Calu3 (cell line): ENCODE measurements at regions of chr1 and their contacts with region 1.

Region 1: GRCh38 chr1:107669996-107670395 is 295.0 kb downstream of the VAV3 start:
- DNase-seq: peak; percentile 76
- H3K4me3 Mint-ChIP-seq: peak overlapping the region; percentile 51
- H3K27ac Mint-ChIP-seq: peak overlapping the region; percentile 90
- H3K4me1 Mint-ChIP-seq: peaks cover 56% of the 10 kb centered on the region
- H3K27me3 Mint-ChIP-seq: no peaks in the 10 kb centered on the region
- CTCF ChIP-seq: no peak

Region 2: DNA sequence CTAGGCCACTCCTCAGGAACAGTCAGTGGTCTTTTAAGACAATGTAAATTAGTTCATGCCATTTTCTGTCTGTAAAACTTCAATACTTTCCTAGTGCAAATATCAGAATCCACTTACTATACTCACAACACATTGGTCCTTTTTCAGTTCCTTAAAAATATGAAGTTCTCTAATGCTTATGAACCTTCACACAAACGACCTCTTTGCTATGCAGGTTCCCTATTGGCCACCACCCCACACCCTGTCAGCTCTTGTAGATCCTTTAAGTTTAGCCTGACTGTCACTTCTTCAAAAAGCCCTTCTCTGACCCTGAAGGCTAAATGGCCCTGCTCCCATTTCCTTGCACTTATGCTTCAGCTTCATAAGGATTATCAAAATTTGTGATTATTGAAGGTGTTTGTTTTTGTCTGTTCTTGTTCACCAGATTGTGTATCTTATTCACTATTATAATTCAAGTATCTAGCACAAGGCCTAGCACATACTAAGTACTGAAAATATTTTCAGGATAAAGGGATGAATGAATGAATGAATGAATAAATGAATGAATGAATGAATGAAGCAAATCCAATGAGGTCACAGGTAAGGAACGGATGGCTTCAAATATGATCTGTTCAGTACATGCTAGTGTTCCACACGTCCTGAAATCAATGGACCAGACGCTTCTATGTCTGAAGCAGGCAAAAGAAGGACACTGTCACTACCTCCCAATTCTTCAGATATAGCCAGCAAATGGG is 78.9 kb before region 1 on chr1:
- CTCF ChIA-PET with region 1: no interaction called
- intact Hi-C with region 1: loop called (anchors 5 kb)
- DNase-seq: no peak
- H3K4me3 Mint-ChIP-seq: no peak overlapping the region
- H3K27ac Mint-ChIP-seq: no peak overlapping the region
- H3K4me1 Mint-ChIP-seq: peaks cover 26% of the 10 kb centered on the region
- H3K27me3 Mint-ChIP-seq: no peaks in the 10 kb centered on the region
- CTCF ChIP-seq: no peak

Region 3: GRCh38 chr1:107604290-107604689 is 65.7 kb before region 1 on chr1:
- CTCF ChIA-PET with region 1: no interaction called
- intact Hi-C with region 1: no loop called
- DNase-seq: no peak
- H3K4me3 Mint-ChIP-seq: no peak overlapping the region
- H3K27ac Mint-ChIP-seq: peak overlapping the region; percentile 17
- H3K4me1 Mint-ChIP-seq: no peaks in the 10 kb centered on the region
- H3K27me3 Mint-ChIP-seq: no peaks in the 10 kb centered on the region
- CTCF ChIP-seq: no peak

Region 4: DNA sequence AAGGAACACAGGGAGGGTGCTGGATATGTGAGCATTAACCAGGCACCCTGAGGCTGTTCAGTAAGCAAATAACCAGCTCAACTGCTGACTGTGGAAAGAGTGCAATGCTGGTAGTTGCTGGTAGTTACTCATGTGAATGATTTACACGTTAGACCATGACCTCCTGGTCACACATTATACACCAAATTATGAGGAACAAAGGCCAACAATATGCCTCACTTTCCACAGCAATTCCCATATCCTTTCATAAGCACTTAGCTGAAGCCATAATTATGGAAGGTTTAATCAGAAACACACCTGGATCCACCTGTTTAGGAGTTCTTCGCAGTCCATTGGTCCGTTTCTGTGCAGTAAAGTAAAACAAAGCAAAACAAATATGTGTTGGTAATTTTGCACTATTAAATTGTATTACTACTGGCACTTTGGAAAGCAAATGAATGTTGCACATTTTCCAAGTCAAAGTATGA is 13.2 kb after region 1 on chr1:
- CTCF ChIA-PET with region 1: interaction called, 13 read pairs
- intact Hi-C with region 1: loop called (anchors 1 kb)
- DNase-seq: peak; percentile 58
- H3K4me3 Mint-ChIP-seq: peak overlapping the region; percentile 55
- H3K27ac Mint-ChIP-seq: peak overlapping the region; percentile 76
- H3K4me1 Mint-ChIP-seq: peaks cover 10% of the 10 kb centered on the region
- H3K27me3 Mint-ChIP-seq: no peaks in the 10 kb centered on the region
- CTCF ChIP-seq: no peak

Region 5: DNA sequence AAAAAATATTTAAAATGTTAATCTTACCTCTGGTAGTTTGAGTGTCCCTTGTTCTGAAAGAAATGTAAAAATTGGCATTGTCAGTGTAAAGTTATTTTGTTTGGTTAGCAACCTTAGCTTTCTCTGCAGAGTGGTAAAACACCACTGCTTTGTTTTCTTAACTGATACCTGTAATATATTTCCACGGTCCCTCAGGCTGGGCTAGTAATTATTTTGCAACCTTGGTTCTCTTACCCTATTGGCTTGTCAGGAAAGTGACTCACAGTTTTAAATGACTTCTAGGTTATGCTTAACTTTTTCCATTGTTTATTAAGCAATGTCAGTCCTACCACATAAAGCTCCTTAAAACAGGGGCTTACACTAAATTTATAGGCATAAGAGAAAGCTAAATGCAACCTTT is 18.4 kb after region 1 on chr1:
- CTCF ChIA-PET with region 1: interaction called, 6 read pairs
- intact Hi-C with region 1: loop called (anchors 1 kb)
- DNase-seq: peak; percentile 44
- H3K4me3 Mint-ChIP-seq: peak overlapping the region; percentile 77
- H3K27ac Mint-ChIP-seq: peak overlapping the region; percentile 95
- H3K4me1 Mint-ChIP-seq: peaks cover 31% of the 10 kb centered on the region
- H3K27me3 Mint-ChIP-seq: no peaks in the 10 kb centered on the region
- CTCF ChIP-seq: no peak